ENCODE measurements at regions of chr9 and their contacts with region 1.

Region 1: GRCh38 chr9:110029429-110029955 is 178.5 kb downstream of the C9orf152 start:
- DNase-seq: peak; percentile 88
- H3K4me3 Mint-ChIP-seq: peak overlapping the region; percentile 9
- H3K27ac Mint-ChIP-seq: peak overlapping the region; percentile 95
- H3K4me1 Mint-ChIP-seq: peaks cover 48% of the 10 kb centered on the region
- H3K27me3 Mint-ChIP-seq: no peaks in the 10 kb centered on the region
- CTCF ChIP-seq: no peak

Region 2: GRCh38 chr9:110015759-110016158 is 13.7 kb before region 1 on chr9:
- CTCF ChIA-PET with region 1: interaction called, 3 read pairs
- POLR2A ChIA-PET with region 1: interaction called, 13 read pairs
- intact Hi-C with region 1: no loop called
- DNase-seq: peak; percentile 88
- H3K4me3 Mint-ChIP-seq: no peak overlapping the region
- H3K27ac Mint-ChIP-seq: peak overlapping the region; percentile 75
- H3K4me1 Mint-ChIP-seq: peaks cover 11% of the 10 kb centered on the region
- H3K27me3 Mint-ChIP-seq: no peaks in the 10 kb centered on the region
- CTCF ChIP-seq: no peak

Region 3: DNA sequence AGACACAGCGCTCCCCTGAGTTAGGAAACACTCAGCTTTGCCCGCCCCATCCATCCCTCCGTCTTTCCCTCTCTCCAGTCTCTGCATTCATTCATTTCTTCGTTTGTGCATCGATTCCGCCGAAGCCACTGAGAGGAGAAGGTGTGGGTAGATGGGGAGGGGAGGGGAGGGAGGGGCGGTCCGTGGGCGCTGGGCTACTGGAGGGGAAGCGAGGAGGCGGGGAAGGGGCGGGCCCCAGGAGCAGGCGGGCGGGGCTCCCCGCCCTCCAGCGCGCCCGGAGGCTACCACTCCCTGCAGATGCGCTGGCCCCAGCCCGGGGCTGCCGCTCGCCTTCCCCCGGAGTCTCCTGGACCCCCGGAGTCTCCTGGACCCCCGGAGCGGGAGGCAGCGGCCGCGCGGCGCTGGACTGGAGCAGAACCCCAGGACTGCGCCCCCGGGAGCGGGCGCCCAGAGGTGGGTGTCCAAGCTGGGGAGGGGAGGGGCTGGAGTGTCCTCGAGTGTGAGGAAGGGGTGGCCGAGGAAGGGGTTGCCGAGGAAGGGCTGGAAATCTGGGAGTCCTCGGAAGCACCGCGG is 19.0 kb after region 1 on chr9:
- CTCF ChIA-PET with region 1: interaction called, 3 read pairs
- POLR2A ChIA-PET with region 1: interaction called, 51 read pairs
- intact Hi-C with region 1: no loop called
- DNase-seq: peak; percentile 59
- H3K4me3 Mint-ChIP-seq: peak overlapping the region; percentile 99
- H3K27ac Mint-ChIP-seq: no peak overlapping the region
- H3K4me1 Mint-ChIP-seq: peaks cover 33% of the 10 kb centered on the region
- H3K27me3 Mint-ChIP-seq: no peaks in the 10 kb centered on the region
- CTCF ChIP-seq: no peak

Measured in MCF 10A (cell line).